IMR-90 (cell line): ENCODE measurements at regions of chrX and their contacts with region 1.

Region 1: GRCh38 chrX:103464774-103465117 is 54.5 kb downstream of the RAB40A start:
- DNase-seq: peak; percentile 72
- ATAC-seq: peak; percentile 94
- H3K4me3 ChIP-seq: no peak overlapping the region
- H3K27ac ChIP-seq: no peak overlapping the region
- H3K4me1 ChIP-seq: peaks cover 5% of the 10 kb centered on the region; the same call in 1 of the 2 replicates
- H3K27me3 ChIP-seq: peaks cover 2% of the 10 kb centered on the region; the same call in 1 of the 2 replicates
- CTCF ChIP-seq: peak; percentile 79
- POLR2A ChIP-seq: no peak
- RAD21 ChIP-seq: peak; percentile 82

Region 2: DNA sequence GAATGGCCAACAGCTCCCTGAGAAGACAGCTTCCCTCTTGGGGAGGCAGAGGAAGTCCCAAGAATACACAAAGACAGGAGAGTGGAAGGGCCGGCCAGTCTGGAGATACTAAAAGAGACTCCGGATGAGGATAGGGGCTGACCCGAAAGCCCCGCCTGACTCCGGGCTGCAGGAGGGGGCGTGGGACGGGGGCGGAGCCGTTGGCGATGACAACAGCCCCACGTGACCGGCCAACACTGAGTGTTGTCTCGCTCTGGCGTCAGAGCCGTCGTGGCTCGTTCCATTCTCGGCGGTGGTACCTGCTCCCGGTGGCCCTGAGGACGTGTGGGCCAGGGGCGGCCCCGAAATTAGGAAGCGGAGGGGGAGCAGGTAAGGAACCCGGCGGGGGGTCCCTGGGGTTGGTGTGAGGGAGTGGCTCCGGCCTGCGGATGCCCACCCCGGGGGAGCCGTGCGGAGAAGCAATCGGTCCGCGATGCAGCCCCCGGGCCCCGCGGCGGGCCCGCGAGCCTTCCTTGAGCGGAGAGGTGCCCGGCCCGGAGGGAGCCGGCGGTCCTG is 249.8 kb before region 1 on chrX and contains the start of gene BEX4:
- CTCF ChIA-PET with region 1: interaction called, 3 read pairs
- POLR2A ChIA-PET with region 1: no interaction called
- dilution Hi-C with region 1: no loop called
- in situ Hi-C with region 1: loop called (anchors 10 kb)
- intact Hi-C with region 1: loop called (anchors 1 kb)
- DNase-seq: peak; percentile 41
- ATAC-seq: peak; percentile 84
- H3K4me3 ChIP-seq: peak within 1 kb of the TSS; percentile 61
- H3K27ac ChIP-seq: no peak within 1 kb of the TSS
- H3K4me1 ChIP-seq: no peaks in the 10 kb centered on the region
- H3K27me3 ChIP-seq: peaks cover 9% of the 10 kb centered on the region
- CTCF ChIP-seq: no peak
- POLR2A ChIP-seq: no peak
- RAD21 ChIP-seq: no peak
- total RNA-seq, gene BEX4: 0.54 and 3.3 TPM in 2 replicates

Region 3: GRCh38 chrX:103254921-103255493 is 209.7 kb before region 1 on chrX and contains the start of gene TCEAL8:
- CTCF ChIA-PET with region 1: interaction called, 3 read pairs
- POLR2A ChIA-PET with region 1: no interaction called
- dilution Hi-C with region 1: no loop called
- in situ Hi-C with region 1: no loop called
- intact Hi-C with region 1: loop called (anchors 1 kb)
- DNase-seq: peak; percentile 74
- ATAC-seq: peak; percentile 88
- H3K4me3 ChIP-seq: peak within 1 kb of the TSS; percentile 94
- H3K27ac ChIP-seq: peak within 1 kb of the TSS; percentile 89
- H3K4me1 ChIP-seq: no peaks in the 10 kb centered on the region
- H3K27me3 ChIP-seq: peaks cover 12% of the 10 kb centered on the region
- CTCF ChIP-seq: no peak
- POLR2A ChIP-seq: no peak; the same call in 1 of the 2 replicates
- RAD21 ChIP-seq: no peak
- total RNA-seq, gene TCEAL8: 31.5 and 91.4 TPM in 2 replicates

Region 4: DNA sequence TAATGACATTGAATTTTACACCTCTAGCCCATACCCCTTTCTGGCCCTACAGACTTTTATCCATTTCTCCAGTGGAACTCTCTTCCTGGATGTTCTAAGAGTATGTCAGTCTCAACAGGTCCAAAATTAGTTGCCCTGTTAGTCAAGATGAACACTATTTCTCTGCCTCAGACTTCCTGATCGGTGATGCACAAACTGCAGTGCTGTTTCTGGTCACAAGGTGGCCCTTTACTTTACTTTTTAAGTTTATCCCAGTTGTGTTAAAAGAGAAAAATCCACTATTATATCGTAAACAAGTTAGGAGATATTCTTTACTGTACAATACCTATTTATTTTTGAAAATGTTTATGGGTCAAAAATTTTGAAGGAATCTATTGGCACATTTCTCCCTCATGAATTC is 121.6 kb before region 1 on chrX:
- CTCF ChIA-PET with region 1: interaction called, 4 read pairs
- POLR2A ChIA-PET with region 1: no interaction called
- dilution Hi-C with region 1: no loop called
- in situ Hi-C with region 1: loop called (anchors 5 kb)
- intact Hi-C with region 1: loop called (anchors 1 kb)
- DNase-seq: peak; percentile 55
- ATAC-seq: peak; percentile 83
- H3K4me3 ChIP-seq: no peak overlapping the region
- H3K27ac ChIP-seq: no peak overlapping the region
- H3K4me1 ChIP-seq: peaks cover 2% of the 10 kb centered on the region; the same call in 1 of the 2 replicates
- H3K27me3 ChIP-seq: peaks cover 15% of the 10 kb centered on the region
- CTCF ChIP-seq: peak; percentile 69
- POLR2A ChIP-seq: no peak
- RAD21 ChIP-seq: peak; percentile 69

Region 5: DNA sequence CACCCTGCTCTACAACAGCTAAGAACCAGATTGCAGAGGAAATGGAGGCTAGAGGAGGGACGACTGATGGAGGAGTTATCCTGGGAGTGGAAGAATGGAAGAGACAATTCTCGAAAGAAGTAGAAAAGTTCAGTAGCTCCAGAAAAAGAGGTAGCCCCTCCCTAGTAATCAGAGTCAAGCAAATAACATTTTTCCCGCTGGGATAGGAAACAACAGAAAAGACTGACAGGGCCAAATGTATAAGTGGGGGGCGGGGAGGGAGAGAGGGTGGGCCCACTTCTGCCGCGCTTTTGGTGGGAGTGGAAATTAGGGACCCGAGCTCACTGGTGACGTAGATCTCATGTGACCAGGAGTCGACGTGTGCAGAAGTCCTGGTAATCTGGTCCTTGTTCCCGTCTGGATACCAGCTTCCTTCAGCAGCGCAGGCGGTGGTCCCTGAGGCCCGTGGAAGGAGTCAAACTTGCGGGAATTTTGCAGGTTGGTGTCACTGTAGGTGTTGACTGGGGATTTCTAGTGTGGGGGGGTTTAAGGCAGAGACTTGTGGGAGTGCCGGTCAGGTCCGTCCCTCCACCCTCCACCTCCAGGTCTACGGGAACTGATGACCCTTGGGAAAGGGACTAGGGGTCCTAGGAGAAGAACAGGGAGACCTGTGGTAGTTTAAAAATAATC is 108.5 kb before region 1 on chrX and contains the start of gene TCEAL9:
- CTCF ChIA-PET with region 1: no interaction called
- POLR2A ChIA-PET with region 1: interaction called, 3 read pairs
- dilution Hi-C with region 1: no loop called
- in situ Hi-C with region 1: no loop called
- intact Hi-C with region 1: loop called (anchors 5 kb)
- DNase-seq: peak; percentile 83
- ATAC-seq: peak; percentile 81
- H3K4me3 ChIP-seq: peak within 1 kb of the TSS; percentile 94
- H3K27ac ChIP-seq: peak within 1 kb of the TSS; percentile 87
- H3K4me1 ChIP-seq: peaks cover 3% of the 10 kb centered on the region; the same call in 1 of the 2 replicates
- H3K27me3 ChIP-seq: no peaks in the 10 kb centered on the region
- CTCF ChIP-seq: no peak
- POLR2A ChIP-seq: peak; percentile 92
- RAD21 ChIP-seq: no peak
- total RNA-seq, gene TCEAL9: 20.3 and 94.4 TPM in 2 replicates

Region 6: DNA sequence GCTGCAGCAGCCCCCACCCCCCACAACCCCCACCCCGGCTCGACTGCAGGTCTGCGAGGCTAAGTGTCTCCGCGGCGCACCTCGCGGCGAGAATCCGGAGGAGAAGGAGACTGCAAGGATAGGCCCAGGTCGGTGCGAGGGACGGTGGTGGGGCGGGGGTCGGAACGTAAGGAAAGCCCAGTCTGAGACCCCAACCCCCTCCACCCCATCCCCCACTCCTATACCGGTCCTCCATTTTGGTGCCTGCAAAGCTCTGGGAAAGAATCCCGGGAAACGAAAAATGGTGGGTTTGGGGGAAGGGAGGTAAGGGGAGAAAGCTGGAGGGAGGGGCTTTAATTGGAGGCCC is 87.8 kb before region 1 on chrX:
- CTCF ChIA-PET with region 1: no interaction called
- POLR2A ChIA-PET with region 1: interaction called, 3 read pairs
- dilution Hi-C with region 1: no loop called
- in situ Hi-C with region 1: no loop called
- intact Hi-C with region 1: loop called (anchors 1 kb)
- DNase-seq: peak; percentile 27
- ATAC-seq: peak; percentile 59
- H3K4me3 ChIP-seq: peak overlapping the region; percentile 88
- H3K27ac ChIP-seq: peak overlapping the region; percentile 99
- H3K4me1 ChIP-seq: peaks cover 3% of the 10 kb centered on the region
- H3K27me3 ChIP-seq: peaks cover 2% of the 10 kb centered on the region; the same call in 1 of the 2 replicates
- CTCF ChIP-seq: no peak
- POLR2A ChIP-seq: no peak
- RAD21 ChIP-seq: no peak

Region 7: DNA sequence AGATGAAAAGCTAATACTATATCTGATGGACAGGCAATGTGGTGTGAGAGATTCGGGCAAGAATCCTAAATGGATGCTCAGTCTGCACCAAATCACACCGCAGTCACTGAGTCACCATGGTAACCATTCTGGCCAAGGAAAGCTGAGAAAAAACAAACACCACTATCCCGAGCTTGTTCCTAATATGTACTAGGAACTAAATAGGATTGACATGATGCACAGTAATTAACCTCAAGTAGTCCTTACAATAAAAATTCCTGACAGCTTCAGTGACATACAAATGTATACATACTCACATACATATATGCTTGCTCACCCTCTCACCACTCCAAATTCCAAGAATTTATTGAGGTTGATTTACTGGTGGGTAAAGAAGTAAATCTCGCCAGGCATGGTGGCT is 55.6 kb after region 1 on chrX:
- CTCF ChIA-PET with region 1: no interaction called
- POLR2A ChIA-PET with region 1: no interaction called
- dilution Hi-C with region 1: no loop called
- in situ Hi-C with region 1: no loop called
- intact Hi-C with region 1: no loop called
- DNase-seq: peak; percentile 71
- ATAC-seq: peak; percentile 70
- H3K4me3 ChIP-seq: no peak overlapping the region
- H3K27ac ChIP-seq: no peak overlapping the region
- H3K4me1 ChIP-seq: no peaks in the 10 kb centered on the region
- H3K27me3 ChIP-seq: peaks cover 3% of the 10 kb centered on the region; the same call in 1 of the 2 replicates
- CTCF ChIP-seq: no peak
- POLR2A ChIP-seq: no peak
- RAD21 ChIP-seq: no peak